RWPE1 (cell line): ENCODE measurements at regions of chr9 and their contacts with region 1.

Region 1: GRCh38 chr9:86176468-86176867 is 77.1 kb upstream of the GOLM1 start:
- DNase-seq: peak; percentile 92
- H3K27ac ChIP-seq: no peak overlapping the region
- CTCF ChIP-seq: no peak

Region 2: DNA sequence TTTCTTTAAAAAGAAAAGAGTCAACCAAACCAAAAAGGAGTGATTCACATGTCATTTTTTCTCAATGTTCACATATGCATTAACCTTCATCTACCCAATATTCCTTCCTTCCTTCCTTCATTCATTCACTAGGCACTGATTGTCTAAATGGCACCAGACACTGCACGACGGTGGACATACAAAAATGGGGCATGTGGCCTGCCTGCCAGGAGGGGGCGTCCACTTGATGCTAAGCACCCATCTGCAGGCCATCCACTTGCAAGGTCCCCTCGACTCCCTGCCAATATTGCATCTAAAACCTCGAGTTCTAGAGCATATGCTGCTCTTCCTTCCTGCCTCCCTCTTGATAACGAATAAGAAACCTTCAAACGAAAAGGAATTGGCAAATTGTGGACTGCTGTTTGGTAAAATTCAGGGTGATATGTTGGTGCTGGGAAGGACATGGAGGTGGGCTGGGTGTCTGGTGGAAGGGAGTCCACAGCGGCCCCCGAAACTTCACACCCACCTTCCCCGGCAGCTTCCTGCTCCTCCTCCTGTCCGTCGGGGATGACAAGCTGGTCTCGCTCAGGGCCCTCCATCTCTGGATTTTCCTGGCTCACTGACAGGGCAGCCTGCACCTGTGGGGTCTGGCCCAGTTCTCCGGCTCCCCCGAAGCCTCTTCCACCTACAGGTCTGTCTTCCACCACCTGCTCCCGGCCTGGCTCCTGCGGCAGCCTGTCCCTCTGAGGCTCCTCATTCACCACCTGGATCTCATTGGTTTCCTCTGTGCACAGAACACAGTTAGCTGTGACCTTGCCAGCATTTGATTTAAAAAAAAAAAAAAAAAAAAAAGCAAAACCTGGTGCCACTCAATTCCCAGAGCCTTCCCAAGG is 141.4 kb before region 1 on chr9:
- CTCF ChIA-PET with region 1: no interaction called
- POLR2A ChIA-PET with region 1: interaction called, 10 read pairs
- DNase-seq: peak; percentile 57
- H3K27ac ChIP-seq: no peak overlapping the region
- CTCF ChIP-seq: peak; percentile 19; the same call in 1 of the 2 replicates